Aorta (tissue), 5 donors: ENCODE measurements at regions of chr6 and their contacts with region 1.

Region 1: DNA sequence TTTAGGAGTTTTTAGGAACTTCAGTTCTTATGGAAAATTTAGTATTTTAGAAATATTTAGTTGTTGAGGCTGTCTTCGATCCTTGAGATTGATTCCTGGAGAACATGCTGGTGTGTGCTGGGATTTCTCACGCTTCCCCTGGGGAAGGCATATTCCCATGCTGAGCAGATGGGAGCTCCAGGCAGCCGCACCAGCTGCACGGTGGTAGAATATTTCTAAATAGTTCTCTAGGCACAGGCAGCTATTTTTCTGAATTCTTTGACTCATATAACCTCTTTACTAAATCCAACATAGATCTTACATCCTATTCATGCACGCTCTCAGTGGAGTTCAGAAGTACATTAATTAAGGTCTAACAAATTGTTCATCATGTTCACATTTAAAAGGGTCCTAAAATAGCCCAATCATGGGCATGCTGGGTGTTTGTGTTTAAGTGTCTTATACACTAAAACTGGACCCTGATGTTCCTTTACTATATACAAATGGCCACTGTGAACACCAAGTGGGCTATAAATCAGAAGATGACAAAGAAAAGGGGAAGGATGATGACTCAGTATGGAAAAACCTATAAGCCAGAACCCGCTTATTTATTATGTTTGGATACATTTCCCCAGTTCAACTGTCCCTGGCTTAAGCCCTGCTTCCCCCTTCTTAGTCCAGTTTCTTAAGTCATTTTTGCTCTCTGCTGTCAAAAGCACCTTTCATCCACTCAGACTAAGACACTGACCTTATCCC is 138.5 kb downstream of the UST start:
- DNase-seq: no peak
- ATAC-seq: no peak
- H3K4me3 ChIP-seq: no peak overlapping the region
- H3K27ac ChIP-seq: no peak overlapping the region
- H3K4me1 ChIP-seq: peaks cover 0 to 22% of the 10 kb centered on the region in 2 donors
- H3K27me3 ChIP-seq: no peaks in the 10 kb centered on the region

Region 2: DNA sequence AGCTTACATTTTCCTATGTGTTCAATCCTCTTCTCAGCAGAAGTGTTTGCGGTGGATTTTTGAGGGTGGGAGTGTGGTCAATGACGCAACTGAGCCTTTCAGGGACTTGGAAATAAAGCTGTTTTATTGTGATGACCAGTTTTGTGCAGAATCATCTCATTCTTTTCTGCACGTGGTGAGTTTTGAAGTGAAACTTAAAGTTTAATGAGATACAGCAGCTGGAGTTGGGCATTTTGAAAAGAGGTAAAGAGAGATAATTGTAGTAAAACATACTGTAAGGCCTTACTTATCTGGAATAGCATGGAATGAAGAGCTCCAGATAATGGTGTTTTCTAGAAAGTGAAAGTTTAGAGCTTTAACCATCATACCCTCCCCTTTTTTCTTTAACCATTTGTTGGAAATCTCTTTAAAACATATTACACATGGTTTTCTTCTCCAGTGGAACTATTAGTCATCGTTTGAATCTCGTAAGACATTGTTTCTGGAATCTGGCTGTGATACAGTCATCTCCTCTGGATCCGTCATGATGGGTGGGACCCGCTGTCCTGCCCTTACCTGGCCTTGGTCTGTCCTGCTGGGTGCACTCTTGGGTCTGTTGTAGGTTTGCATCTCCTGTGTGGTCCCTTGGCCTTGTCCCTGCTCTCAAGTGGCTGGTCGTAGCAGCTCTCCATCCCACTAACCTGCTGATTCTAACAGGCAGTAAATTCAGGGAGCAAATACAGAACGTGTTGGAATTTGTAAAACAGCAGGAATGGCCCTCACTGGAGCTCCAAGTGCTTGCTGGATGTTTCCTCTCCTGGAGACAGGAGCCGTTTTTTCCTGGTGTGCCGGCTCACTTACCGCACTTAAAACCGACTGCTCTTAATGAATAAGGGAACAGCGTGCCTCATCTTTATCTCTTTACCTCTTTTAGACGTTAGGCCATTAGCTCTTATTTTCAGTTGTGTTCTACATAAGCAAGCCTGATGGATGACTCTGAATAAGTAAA is 108.7 kb before region 1 on chr6:
- intact Hi-C with region 1: loop called in 1 of 2 experiments (anchors 10 kb)
- DNase-seq: no peak
- ATAC-seq: peak; percentile 37
- H3K4me3 ChIP-seq: no peak overlapping the region
- H3K27ac ChIP-seq: no peak overlapping the region
- H3K4me1 ChIP-seq: peaks cover 2 to 12% of the 10 kb centered on the region in 2 donors
- H3K27me3 ChIP-seq: no peaks in the 10 kb centered on the region

Region 3: DNA sequence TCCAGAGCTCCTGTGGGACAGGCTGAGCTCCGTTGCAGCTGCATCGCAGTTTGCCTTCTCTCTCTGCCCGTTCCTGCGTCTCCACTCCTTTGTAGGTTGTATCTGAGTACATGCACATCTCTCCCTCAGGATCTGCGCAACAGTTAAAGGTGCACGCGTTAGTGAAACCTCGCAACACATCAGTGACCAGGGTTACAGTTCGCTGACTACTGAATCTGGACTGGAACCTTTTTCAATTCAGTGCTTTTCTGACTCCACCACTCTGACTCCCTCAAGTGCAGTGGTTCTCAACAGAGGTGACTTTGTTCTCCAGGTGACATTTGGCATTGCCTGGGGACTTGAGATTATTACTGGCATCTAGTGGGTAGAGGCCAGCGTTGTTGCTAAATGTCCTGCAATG is 94.5 kb before region 1 on chr6:
- intact Hi-C with region 1: loop called in 1 of 2 experiments (anchors 5 kb)
- DNase-seq: no peak
- ATAC-seq: no peak
- H3K4me3 ChIP-seq: no peak overlapping the region
- H3K27ac ChIP-seq: no peak overlapping the region
- H3K4me1 ChIP-seq: peaks cover 0 to 2% of the 10 kb centered on the region in 2 donors
- H3K27me3 ChIP-seq: no peaks in the 10 kb centered on the region

Region 4: DNA sequence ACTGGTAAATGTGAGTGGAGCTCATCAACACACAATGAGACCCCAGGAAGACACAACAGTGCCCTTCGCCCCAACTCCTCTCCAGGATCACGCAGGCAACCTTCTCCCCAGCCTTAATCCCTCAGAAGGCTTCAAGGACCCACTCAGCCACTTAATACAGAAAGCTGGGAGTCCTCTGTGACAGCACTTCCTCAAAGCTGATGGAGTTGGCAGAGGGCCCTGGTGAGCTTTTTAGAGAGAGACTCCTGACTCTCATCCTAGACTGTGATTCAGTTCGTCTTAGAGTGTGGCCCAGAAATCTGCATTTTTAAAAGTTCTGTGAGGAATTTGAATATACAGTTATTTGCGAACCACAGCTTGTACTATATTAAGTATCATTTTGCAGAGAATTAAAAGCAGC is 49.2 kb after region 1 on chr6:
- intact Hi-C with region 1: loop called in 1 of 2 experiments (anchors 5 kb)
- DNase-seq: peak in 1 of 2 donors; percentile 74
- ATAC-seq: peak; percentile 54
- H3K4me3 ChIP-seq: no peak overlapping the region
- H3K27ac ChIP-seq: peak overlapping the region in 1 of 2 donors; percentile 26
- H3K4me1 ChIP-seq: peaks cover 0 to 11% of the 10 kb centered on the region in 2 donors
- H3K27me3 ChIP-seq: no peaks in the 10 kb centered on the region